Activated CD8-positive, alpha-beta T cell treated with anti-CD3 and anti-CD28 coated beads, Interleukin-2, amount 10 ng/mL, durations not matched to agents 7 days and 5 days (primary cell): ENCODE measurements at regions of chr15 and their contacts with region 1.

Region 1: DNA sequence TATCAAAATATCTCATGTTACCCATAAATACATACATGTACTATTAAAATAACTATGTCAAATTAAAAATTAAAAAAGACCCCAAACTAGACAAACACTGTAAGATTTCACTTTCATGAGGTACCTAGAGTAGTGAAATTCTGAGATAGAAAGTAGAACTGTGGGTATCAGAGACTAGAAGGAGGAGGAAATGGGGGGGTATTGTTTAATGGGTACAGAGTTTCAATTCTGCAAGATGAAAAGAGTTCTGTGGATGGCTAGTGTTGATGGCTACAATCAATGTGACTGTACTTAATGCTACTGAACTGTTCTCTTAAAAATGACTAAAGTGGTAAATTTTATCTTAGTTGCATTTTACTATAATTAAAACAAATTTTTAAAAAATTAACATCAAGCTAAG is 36.6 kb downstream of the RFX7 start:
- DNase-seq: no peak
- ATAC-seq: peak; percentile 57
- H3K4me3 Mint-ChIP-seq: no peak overlapping the region
- H3K27ac Mint-ChIP-seq: peak overlapping the region; percentile 69
- H3K4me1 Mint-ChIP-seq: peaks cover 50% of the 10 kb centered on the region
- H3K27me3 Mint-ChIP-seq: no peaks in the 10 kb centered on the region

Region 2: GRCh38 chr15:56160966-56161365 is 46.1 kb before region 1 on chr15:
- CTCF ChIA-PET with region 1: no interaction called
- POLR2A ChIA-PET with region 1: no interaction called
- DNase-seq: no peak
- ATAC-seq: no peak
- H3K4me3 Mint-ChIP-seq: no peak overlapping the region
- H3K27ac Mint-ChIP-seq: no peak overlapping the region
- H3K4me1 Mint-ChIP-seq: peaks cover 12% of the 10 kb centered on the region
- H3K27me3 Mint-ChIP-seq: no peaks in the 10 kb centered on the region

Region 3: DNA sequence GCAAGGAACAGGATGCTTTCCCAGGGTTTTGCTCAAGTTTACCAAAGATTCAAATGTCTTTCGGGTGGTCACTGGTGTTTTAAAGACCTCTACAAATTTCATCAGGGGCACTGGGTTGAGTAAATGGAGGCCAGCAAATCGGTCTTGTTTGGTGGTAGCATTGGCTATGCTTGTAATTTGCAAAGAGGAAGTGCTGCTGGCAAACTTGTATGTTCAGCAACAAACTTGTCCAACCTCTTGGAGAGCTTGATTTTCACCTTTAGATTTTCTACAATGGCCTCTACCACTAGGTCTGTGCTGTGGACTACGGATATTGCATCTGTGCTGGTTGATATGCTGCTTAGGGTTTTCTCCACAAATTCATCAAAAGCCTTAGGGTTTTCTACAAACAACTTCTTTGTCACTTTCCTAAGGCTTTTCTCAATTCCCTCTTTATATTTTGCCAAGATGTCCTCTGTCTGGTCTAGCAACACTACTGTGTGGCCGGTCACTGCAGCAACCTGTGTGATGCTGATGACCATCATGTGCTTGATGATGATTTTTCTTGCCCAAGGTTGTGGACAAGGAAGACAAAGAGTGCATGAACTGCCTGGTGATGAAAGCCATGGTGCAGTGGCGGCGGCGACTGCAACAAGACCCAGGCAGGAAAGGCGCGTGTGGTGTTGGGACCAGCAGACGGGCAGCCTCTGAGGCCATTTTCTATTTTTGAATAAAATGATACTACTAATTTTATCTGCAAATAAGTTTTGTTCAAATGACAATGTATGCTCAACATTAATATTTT is 14.2 kb before region 1 on chr15:
- CTCF ChIA-PET with region 1: no interaction called
- POLR2A ChIA-PET with region 1: no interaction called
- DNase-seq: no peak
- ATAC-seq: no peak
- H3K4me3 Mint-ChIP-seq: no peak overlapping the region
- H3K27ac Mint-ChIP-seq: no peak overlapping the region
- H3K4me1 Mint-ChIP-seq: peaks cover 7% of the 10 kb centered on the region
- H3K27me3 Mint-ChIP-seq: no peaks in the 10 kb centered on the region

Region 4: GRCh38 chr15:56245871-56246814 is 39.1 kb after region 1 on chr15:
- CTCF ChIA-PET with region 1: interaction called, 15 read pairs
- POLR2A ChIA-PET with region 1: interaction called, 6 read pairs
- DNase-seq: peak; percentile 91
- ATAC-seq: peak; percentile 74
- H3K4me3 Mint-ChIP-seq: peak overlapping the region; percentile 88
- H3K27ac Mint-ChIP-seq: peak overlapping the region; percentile 92
- H3K4me1 Mint-ChIP-seq: peaks cover 28% of the 10 kb centered on the region
- H3K27me3 Mint-ChIP-seq: no peaks in the 10 kb centered on the region

Region 5: GRCh38 chr15:56383010-56383409 is 175.9 kb after region 1 on chr15:
- CTCF ChIA-PET with region 1: no interaction called
- POLR2A ChIA-PET with region 1: no interaction called
- DNase-seq: no peak
- ATAC-seq: no peak
- H3K4me3 Mint-ChIP-seq: no peak overlapping the region
- H3K27ac Mint-ChIP-seq: no peak overlapping the region
- H3K4me1 Mint-ChIP-seq: no peaks in the 10 kb centered on the region
- H3K27me3 Mint-ChIP-seq: peaks cover 4% of the 10 kb centered on the region